Testis (tissue), 5 donors: ENCODE measurements at regions of chr5 and their contacts with region 1.

Region 1: DNA sequence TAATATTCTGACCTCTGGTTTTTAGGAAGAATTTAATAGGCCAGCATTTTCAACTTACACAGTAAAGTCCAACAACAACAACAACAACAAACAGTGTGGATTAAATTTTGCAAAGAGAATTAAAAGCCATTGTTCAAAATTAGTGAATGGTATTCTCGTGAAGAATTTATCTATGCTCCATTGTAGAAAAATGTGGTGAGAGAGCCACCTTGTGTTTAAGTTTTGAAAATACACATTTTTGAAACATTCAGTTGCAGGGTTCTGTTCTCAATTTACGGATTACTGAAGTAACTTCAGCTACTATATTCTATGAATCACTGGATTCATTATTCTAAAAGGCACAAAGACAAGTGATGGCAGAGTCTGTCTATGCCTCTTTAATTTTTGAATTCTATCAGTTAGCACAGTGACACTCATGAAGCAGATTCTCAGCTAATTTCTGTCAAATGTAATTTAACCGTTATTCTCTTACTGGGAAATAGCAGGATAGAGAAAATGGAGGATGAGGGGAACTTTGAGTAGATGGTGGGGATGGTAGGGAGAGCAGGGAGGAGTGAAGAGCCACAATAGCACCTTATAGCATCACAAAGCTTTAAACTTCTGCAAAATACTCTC is 11.0 kb downstream of the CCDC152 start:
- DNase-seq: no peak
- H3K4me3 ChIP-seq: no peak overlapping the region
- H3K27ac ChIP-seq: no peak overlapping the region
- H3K4me1 ChIP-seq: no peaks in the 10 kb centered on the region
- H3K27me3 ChIP-seq: no peaks in the 10 kb centered on the region
- CTCF ChIP-seq: peak; percentile 15 to 52 (median 41)
- POLR2A ChIP-seq: no peak

Region 2: GRCh38 chr5:41856644-41857491 is 910.7 kb before region 1 on chr5:
- intact Hi-C with region 1: loop called (anchors 10 kb)
- DNase-seq: peak; percentile 69
- H3K4me3 ChIP-seq: no peak overlapping the region
- H3K27ac ChIP-seq: no peak overlapping the region
- H3K4me1 ChIP-seq: no peaks in the 10 kb centered on the region
- H3K27me3 ChIP-seq: no peaks in the 10 kb centered on the region
- CTCF ChIP-seq: peak; percentile 44 to 80 (median 75)
- POLR2A ChIP-seq: no peak

Region 3: GRCh38 chr5:41903892-41904799 is 863.5 kb before region 1 on chr5 and contains the start of gene RIMOC1:
- intact Hi-C with region 1: no loop called
- DNase-seq: peak; percentile 99
- H3K4me3 ChIP-seq: peak within 1 kb of the TSS; percentile 79 to 88
- H3K27ac ChIP-seq: peak within 1 kb of the TSS; percentile 88 to 89
- H3K4me1 ChIP-seq: peaks cover 7% of the 10 kb centered on the region
- H3K27me3 ChIP-seq: no peaks in the 10 kb centered on the region
- CTCF ChIP-seq: no peak
- POLR2A ChIP-seq: no peak
- total RNA-seq, gene RIMOC1: 19.6 to 20.2 TPM